ENCODE measurements at regions of chr2 and their contacts with region 1.

Region 1: GRCh38 chr2:175167792-175168563 is at the start of gene ATF2:
- DNase-seq: peak; percentile 98
- H3K4me3 Mint-ChIP-seq: peak within 1 kb of the TSS; percentile 97
- H3K27ac Mint-ChIP-seq: peak within 1 kb of the TSS; percentile 97
- H3K4me1 Mint-ChIP-seq: peaks cover 53% of the 10 kb centered on the region
- H3K27me3 Mint-ChIP-seq: no peaks in the 10 kb centered on the region
- total RNA-seq, gene ATF2: 57.0 and 59.7 TPM in 2 replicates

Region 2: DNA sequence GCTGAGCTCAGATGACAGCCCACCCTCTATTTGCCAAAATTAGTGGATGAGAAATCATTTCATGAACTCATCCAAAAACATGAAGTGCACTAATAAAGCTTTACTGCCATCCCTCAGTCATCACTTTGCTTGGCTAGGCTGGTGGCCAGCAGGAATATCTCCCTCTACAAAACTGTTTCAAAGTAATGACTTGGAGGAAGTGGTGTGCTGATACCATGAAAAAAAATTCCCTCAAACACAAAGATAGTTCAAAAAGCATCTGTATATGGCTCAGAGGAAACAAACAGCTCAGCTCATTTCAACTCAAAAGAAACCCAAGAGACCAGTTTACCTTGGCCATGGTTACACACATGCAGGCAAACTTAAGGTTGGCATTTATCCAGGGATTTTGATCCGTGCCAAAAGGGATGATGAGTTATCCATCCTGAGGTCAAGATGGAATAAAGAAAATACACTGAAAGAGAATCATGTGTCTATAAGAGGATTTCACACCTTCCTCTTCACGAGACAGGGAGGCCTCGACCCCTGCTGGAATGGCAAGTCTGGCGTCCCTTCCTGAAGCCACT is 552.0 kb before region 1 on chr2:
- intact Hi-C with region 1: loop called (anchors 5 kb)
- DNase-seq: no peak
- H3K4me3 Mint-ChIP-seq: peak overlapping the region; percentile 60
- H3K27ac Mint-ChIP-seq: peak overlapping the region; percentile 94
- H3K4me1 Mint-ChIP-seq: peaks cover 92% of the 10 kb centered on the region
- H3K27me3 Mint-ChIP-seq: no peaks in the 10 kb centered on the region

Region 3: DNA sequence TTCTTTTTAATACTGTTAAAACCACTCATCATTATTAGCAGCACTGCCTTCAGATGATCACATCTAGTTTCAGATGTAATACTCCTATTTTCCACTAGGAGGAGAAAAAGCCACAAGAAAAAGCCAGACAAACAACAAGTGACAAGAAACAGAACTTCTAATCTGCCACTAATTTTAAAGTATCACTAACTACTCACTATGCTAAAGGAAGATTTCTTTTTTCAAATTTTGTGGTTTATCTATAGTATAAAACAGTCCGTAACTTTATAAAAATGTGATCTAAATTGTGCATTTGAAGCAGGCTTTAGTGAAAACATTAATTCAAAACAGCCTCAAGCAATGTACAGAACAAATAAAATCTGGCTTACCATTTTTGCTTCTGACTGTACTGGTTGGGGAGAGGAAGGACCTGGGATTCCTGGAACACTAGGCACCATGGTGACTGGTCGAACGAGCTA is 56.7 kb before region 1 on chr2:
- intact Hi-C with region 1: loop called (anchors 1 kb)
- DNase-seq: no peak
- H3K4me3 Mint-ChIP-seq: no peak overlapping the region
- H3K27ac Mint-ChIP-seq: peak overlapping the region; percentile 31
- H3K4me1 Mint-ChIP-seq: peaks cover 4% of the 10 kb centered on the region
- H3K27me3 Mint-ChIP-seq: no peaks in the 10 kb centered on the region

Region 4: DNA sequence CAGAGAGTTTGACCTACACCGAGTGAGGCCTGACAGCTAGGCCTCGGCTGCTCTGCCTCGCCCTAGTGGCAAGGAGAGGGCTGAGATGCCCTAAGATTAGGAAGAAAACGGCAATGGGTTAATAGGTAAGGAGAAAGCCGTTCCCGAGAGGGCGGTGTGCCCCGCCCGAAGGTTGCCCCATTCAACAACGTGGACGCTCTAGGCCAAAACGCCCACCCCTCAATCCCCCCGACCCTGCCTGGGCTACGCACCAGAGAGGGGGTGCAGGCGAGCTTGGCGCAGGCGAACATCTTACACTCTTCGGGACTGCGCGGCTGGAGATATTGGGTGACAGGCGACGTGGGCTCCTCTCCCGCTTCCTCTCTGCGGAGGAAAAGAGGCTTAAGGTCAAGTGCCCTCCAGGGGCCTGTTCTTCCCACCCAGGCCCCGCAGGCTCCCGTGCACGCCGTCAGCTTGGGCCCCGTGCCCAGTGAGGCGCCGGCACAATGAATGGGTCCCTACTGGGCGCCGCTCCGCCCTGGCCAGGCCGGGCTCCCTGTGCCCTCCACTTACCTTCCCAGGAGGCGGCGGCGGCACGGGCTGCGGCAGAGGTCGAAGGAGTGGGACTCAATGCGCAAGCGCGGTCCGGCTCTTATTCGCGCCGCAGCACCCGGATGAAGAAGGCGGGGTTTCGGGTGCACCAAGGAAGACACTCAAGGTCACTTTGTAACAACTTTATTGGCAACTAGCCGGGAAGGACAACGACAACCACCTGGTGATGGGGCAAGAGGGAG is 13.3 kb after region 1 on chr2 and contains the start of gene ATP5MC3:
- intact Hi-C with region 1: loop called (anchors 1 kb)
- DNase-seq: peak; percentile 89
- H3K4me3 Mint-ChIP-seq: peak within 1 kb of the TSS; percentile 89
- H3K27ac Mint-ChIP-seq: peak within 1 kb of the TSS; percentile 84
- H3K4me1 Mint-ChIP-seq: peaks cover 22% of the 10 kb centered on the region
- H3K27me3 Mint-ChIP-seq: no peaks in the 10 kb centered on the region
- total RNA-seq, gene ATP5MC3: 365 and 380 TPM in 2 replicates

Region 5: GRCh38 chr2:176931588-176932563 is 1763.9 kb after region 1 on chr2:
- intact Hi-C with region 1: loop called (anchors 5 kb)
- DNase-seq: peak; percentile 39
- H3K4me3 Mint-ChIP-seq: peak overlapping the region; percentile 58
- H3K27ac Mint-ChIP-seq: peak overlapping the region; percentile 95
- H3K4me1 Mint-ChIP-seq: peaks cover 36% of the 10 kb centered on the region
- H3K27me3 Mint-ChIP-seq: peaks cover 3% of the 10 kb centered on the region